HepG2 (cell line): ENCODE measurements at regions of chr7 and their contacts with region 1.

Region 1: DNA sequence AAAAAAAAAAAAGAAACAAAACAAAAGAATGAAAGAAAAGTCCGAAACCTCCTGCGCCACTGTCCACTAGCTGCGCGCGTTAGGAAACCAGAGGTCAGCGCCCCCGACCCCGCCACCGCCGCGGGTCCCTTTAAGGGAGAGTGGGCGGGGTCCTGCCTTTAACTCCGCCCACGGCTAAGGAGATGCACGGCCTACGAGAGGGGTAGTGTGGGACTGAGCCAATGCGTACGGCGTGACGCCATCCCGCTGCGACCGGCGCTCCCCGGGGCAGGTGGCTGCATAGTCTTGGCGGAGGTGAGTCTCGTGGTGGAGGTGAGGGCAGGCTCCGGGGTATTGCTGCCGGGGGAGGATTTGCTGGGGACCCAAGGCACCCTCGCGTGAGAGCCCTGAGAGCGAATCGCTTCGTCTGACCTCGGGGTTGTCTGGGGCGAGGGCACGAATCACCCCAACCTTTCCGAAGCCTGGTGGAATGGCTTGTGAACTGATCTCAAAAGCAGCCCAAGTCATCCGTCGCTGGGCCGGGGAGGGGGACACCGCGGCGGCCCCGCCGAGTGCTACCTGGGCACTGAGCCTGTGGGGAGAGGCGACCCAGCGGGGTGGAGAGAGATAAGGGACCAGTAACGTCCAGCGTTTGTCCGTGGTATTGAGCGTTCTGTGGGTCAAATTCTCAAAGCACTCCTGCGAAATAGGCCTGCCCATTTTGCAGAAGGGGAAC is at the start of gene MRPS17:
- DNase-seq: peak; percentile 89
- ATAC-seq: peak; percentile 98
- H3K4me3 ChIP-seq: peak within 1 kb of the TSS; percentile 79 to 99 (median 84)
- H3K27ac ChIP-seq: peak within 1 kb of the TSS; percentile 68
- H3K4me1 ChIP-seq: peaks cover 34% of the 10 kb centered on the region
- H3K27me3 ChIP-seq: no peaks in the 10 kb centered on the region; a peak in 1 of 5 replicates
- CTCF ChIP-seq: peak; percentile 28; the same call in 1 of the 2 replicates
- EP300 ChIP-seq: no peak
- POLR2A ChIP-seq: peak; percentile 90 to 96
- RAD21 ChIP-seq: peak; percentile 37; the same call in 1 of the 2 replicates
- total RNA-seq, gene MRPS17: 31.3 and 39.2 TPM in 2 replicates

Region 2: DNA sequence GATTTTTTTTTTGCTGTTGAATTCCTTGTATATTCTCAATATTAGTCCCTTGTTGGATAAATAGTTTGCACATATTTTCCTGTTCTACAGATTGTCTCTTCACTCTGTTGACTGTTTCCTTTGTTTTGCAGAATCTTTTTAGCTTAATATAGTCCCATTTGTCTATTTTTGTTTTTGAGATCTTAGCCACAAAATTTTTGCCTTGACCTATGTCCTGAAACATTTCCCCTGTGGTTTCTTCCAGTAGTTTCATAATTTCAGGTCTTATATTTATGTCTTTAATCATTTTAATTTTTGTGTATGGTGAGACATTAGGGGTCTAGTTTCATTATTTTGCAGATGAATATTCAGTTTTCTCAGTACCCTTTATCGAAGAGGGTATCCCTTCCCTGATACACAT is 494.0 kb before region 1 on chr7:
- CTCF ChIA-PET with region 1: no interaction called
- POLR2A ChIA-PET with region 1: no interaction called
- in situ Hi-C with region 1: no loop called
- intact Hi-C with region 1: no loop called
- DNase-seq: no peak
- ATAC-seq: no peak
- H3K4me3 ChIP-seq: no peak overlapping the region
- H3K27ac ChIP-seq: no peak overlapping the region
- H3K4me1 ChIP-seq: no peaks in the 10 kb centered on the region
- H3K27me3 ChIP-seq: no peaks in the 10 kb centered on the region
- CTCF ChIP-seq: no peak
- EP300 ChIP-seq: no peak
- POLR2A ChIP-seq: no peak
- RAD21 ChIP-seq: no peak

Region 3: GRCh38 chr7:55774326-55775064 is 177.3 kb before region 1 on chr7:
- CTCF ChIA-PET with region 1: no interaction called
- POLR2A ChIA-PET with region 1: no interaction called
- in situ Hi-C with region 1: loop called (anchors 25 kb)
- intact Hi-C with region 1: no loop called
- DNase-seq: no peak
- ATAC-seq: peak; percentile 56
- H3K4me3 ChIP-seq: no peak overlapping the region
- H3K27ac ChIP-seq: no peak overlapping the region
- H3K4me1 ChIP-seq: 0 out of 2 replicates have a peak, but pooled peaks cover 4% of the 10 kb centered on the region
- H3K27me3 ChIP-seq: no peaks in the 10 kb centered on the region
- CTCF ChIP-seq: no peak
- EP300 ChIP-seq: no peak
- POLR2A ChIP-seq: no peak
- RAD21 ChIP-seq: no peak

Region 4: GRCh38 chr7:55887821-55888247 is 64.0 kb before region 1 on chr7:
- CTCF ChIA-PET with region 1: no interaction called
- POLR2A ChIA-PET with region 1: no interaction called
- in situ Hi-C with region 1: no loop called
- intact Hi-C with region 1: loop called (anchors 2 kb)
- DNase-seq: no peak
- ATAC-seq: no peak
- H3K4me3 ChIP-seq: peak overlapping the region; percentile 66 to 69 (median 66)
- H3K27ac ChIP-seq: peak overlapping the region; percentile 67
- H3K4me1 ChIP-seq: peaks cover 7% of the 10 kb centered on the region; the same call in 1 of the 2 replicates
- H3K27me3 ChIP-seq: no peaks in the 10 kb centered on the region; a peak in 1 of 5 replicates
- CTCF ChIP-seq: no peak
- EP300 ChIP-seq: no peak
- POLR2A ChIP-seq: no peak
- RAD21 ChIP-seq: no peak